ENCODE measurements at regions of chr11 and their contacts with region 1.

Region 1: DNA sequence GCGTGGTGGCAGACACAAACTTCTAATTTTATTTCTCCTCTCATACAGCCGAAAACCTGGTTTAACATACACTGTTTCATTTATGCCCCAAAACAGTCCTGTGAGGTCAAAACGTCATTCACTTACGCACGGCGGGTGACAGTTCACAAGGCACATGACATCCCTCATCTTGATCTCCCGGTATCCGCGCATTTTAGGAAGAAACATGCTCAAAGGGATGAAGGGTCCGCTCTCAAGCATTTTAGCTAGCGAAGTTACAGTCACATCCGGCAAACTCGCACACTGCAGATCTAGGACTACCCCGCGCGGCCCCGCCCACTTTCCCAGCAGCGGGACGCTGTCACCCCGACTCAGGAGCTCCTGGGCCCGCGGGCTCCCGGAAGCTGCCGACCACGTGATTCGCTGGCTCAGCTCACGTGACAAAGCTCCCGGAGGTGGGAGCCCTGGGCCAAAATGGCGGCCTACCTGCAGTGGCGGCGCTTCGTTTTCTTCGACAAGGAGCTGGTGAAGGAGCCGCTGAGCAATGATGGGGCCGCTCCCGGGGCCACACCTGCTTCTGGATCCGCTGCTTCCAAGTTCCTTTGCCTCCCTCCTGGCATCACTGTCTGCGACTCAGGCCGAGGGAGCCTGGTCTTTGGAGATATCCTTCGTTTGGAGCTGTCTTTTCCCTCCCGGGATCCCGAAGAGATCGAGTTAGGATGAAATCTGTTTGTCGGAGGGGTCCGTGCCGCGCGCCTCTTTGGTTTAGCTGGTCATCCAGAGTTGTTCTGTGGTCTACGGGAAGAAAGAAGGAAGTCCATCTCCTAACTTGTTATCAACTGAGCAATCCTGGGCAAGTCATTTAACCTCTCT is at the start of gene VPS11:
- H3K4me3 ChIP-seq: peak within 1 kb of the TSS; percentile 99
- H3K27ac ChIP-seq: peak within 1 kb of the TSS; percentile 7; the same call in 1 of the 2 replicates
- H3K4me1 ChIP-seq: no peaks in the 10 kb centered on the region
- CTCF ChIP-seq: no peak

Region 2: DNA sequence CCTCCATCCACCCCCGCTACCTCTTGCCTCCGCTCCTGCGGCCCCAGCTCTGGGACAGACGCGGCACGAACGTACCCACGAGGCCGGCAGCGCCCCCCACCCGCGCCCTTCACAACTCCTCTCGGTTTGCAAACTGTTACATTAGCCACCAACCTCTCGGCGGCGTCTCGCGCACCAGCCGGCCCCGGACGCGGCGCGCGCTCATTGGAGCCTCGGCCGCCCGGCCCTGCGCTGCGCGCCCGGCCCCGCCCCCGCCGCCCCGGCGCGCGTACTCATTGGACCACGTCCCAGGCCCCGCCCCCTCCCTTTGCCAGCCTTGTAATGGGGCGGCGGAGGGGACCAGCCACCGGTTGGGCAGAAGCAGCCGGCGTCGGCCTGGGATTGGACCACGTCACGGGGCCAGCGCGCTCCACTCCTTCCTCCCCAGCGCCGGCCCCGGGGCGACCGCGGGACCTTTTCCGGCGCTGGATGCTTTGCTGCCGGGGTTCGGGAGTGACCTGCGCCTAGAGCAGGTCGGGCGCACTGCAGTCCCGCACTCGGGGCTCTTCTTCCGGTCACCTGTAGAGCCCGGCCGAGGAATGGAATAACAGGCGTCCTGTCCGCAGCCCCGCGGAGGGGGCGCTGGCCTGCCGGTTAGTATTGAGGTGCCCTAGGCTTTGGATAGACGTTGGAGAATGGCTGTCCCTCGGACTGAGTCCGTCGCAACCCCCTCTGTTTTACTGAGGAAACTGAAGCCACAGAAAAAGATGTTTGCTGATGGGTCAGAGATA is 10.4 kb before region 1 on chr11 and contains the start of gene HYOU1:
- CTCF ChIA-PET with region 1: interaction called, 4 read pairs
- POLR2A ChIA-PET with region 1: interaction called, 20 read pairs
- H3K4me3 ChIP-seq: peak within 1 kb of the TSS; percentile 85
- H3K27ac ChIP-seq: peak within 1 kb of the TSS; percentile 72; the same call in 1 of the 2 replicates
- H3K4me1 ChIP-seq: no peaks in the 10 kb centered on the region
- CTCF ChIP-seq: peak; percentile 62

Region 3: DNA sequence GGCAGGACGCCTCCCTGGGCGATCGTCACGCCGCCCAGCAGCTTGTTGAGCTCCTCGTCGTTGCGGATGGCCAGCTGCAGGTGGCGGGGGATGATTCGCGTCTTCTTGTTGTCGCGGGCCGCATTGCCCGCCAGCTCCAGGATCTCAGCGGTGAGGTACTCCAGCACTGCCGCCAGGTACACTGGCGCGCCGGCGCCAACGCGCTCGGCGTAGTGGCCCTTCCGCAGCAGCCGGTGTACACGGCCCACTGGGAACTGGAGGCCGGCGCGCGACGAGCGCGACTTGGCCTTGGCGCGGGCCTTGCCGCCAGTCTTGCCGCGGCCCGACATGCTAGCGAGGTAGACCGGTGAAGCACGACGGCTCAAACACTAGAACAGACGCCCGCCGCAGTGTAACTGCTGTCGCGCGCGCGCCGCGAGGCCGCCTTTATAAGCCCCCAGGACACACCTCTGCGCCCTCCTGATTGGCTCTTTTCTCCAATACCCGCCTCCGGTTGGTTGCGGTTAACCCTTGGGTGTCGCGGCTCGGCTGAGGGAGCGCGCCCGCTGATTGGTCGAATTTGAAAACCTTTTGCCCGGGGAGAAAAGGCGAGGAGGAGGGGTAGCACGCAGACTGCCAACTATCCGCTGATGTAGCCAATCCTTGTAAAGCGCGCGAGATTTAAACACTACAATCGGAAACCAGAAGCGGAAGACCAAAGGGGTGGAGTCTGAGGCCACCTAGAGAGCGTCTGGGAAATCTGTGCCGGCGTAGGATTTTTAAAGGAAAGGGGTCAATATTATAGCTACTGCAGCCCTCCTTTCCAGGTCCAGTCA is 27.7 kb after region 1 on chr11:
- CTCF ChIA-PET with region 1: interaction called, 7 read pairs
- POLR2A ChIA-PET with region 1: interaction called, 19 read pairs
- H3K4me3 ChIP-seq: peak overlapping the region; percentile 98
- H3K27ac ChIP-seq: peak overlapping the region; percentile 82
- H3K4me1 ChIP-seq: no peaks in the 10 kb centered on the region
- CTCF ChIP-seq: peak; percentile 59

Measured in HEK293 (cell line).